ENCODE measurements at regions of chr12 and their contacts with region 1.

Region 1: DNA sequence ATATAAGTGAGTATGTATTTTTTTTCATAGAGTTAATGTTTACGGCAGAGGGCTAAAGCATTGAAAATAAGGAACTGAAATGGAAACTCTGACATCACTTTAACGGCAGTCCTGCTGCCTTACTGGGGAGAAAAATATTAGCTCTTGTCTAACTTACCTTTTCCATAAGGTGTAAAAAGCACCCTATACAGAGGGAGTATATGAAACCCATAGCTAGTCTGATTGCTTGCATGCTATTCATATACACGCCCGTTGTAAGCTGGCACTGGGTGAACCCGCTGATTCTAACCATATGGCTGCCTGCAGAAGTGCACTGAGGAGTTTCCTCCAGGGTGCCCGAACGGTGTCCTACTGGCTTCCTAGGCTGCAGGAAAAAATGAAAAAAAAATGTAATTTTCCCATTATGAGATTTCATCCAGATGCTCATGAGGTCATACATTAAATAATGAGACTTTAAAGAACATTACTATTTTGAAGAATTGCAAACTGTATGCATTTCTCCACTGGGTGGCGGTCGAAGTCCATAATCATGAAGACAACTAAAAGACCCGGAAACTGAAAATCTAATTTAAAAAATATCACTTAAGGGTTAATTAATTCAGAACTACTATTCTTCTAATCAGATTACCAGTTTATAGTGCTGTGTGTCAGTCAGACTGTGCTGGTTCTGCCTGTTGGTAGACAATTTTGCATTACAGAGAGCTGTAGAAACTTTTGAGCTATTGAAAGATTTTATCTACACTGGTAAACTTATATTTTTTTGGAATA is 144.7 kb downstream of the ALX1 start:
- DNase-seq: peak; percentile 15
- ATAC-seq: peak; percentile 91
- H3K4me3 ChIP-seq: no peak overlapping the region
- H3K27ac ChIP-seq: no peak overlapping the region
- H3K4me1 ChIP-seq: no peaks in the 10 kb centered on the region
- H3K27me3 ChIP-seq: no peaks in the 10 kb centered on the region
- CTCF ChIP-seq: peak; percentile 43 to 54 (median 53)
- EP300 ChIP-seq: peak in 1 of 2 experiments; percentile 90; a peak in 1 of 4 replicates
- POLR2A ChIP-seq: no peak
- RAD21 ChIP-seq: peak; percentile 70

Region 2: GRCh38 chr12:85188609-85189008 is 236.2 kb before region 1 on chr12:
- CTCF ChIA-PET with region 1: no interaction called
- POLR2A ChIA-PET with region 1: no interaction called
- RAD21 ChIA-PET with region 1: no interaction called
- SMC1A ChIA-PET with region 1: no interaction called
- in situ Hi-C with region 1: no loop called
- intact Hi-C with region 1: no loop called
- DNase-seq: no peak
- ATAC-seq: no peak
- H3K4me3 ChIP-seq: no peak overlapping the region
- H3K27ac ChIP-seq: no peak overlapping the region
- H3K4me1 ChIP-seq: no peaks in the 10 kb centered on the region
- H3K27me3 ChIP-seq: no peaks in the 10 kb centered on the region
- CTCF ChIP-seq: no peak
- EP300 ChIP-seq: no peak
- POLR2A ChIP-seq: no peak
- RAD21 ChIP-seq: no peak

Region 3: GRCh38 chr12:85310456-85311076 is 114.2 kb before region 1 on chr12:
- CTCF ChIA-PET with region 1: interaction called, 30 read pairs
- POLR2A ChIA-PET with region 1: no interaction called
- RAD21 ChIA-PET with region 1: interaction called, 8 read pairs
- SMC1A ChIA-PET with region 1: interaction called, 11 read pairs
- in situ Hi-C with region 1: no loop called
- intact Hi-C with region 1: no loop called
- DNase-seq: no peak
- ATAC-seq: no peak
- H3K4me3 ChIP-seq: no peak overlapping the region
- H3K27ac ChIP-seq: no peak overlapping the region
- H3K4me1 ChIP-seq: no peaks in the 10 kb centered on the region
- H3K27me3 ChIP-seq: no peaks in the 10 kb centered on the region
- CTCF ChIP-seq: peak in 2 of 3 experiments; percentile 5 to 30; a peak in 2 of 6 replicates
- EP300 ChIP-seq: no peak
- POLR2A ChIP-seq: no peak
- RAD21 ChIP-seq: no peak; the same call in 1 of the 2 replicates

Region 4: GRCh38 chr12:85413266-85413665 is 11.5 kb before region 1 on chr12:
- CTCF ChIA-PET with region 1: interaction called, 23 read pairs
- POLR2A ChIA-PET with region 1: no interaction called
- RAD21 ChIA-PET with region 1: interaction called, 5 read pairs
- SMC1A ChIA-PET with region 1: interaction called, 3 read pairs
- in situ Hi-C with region 1: no loop called
- intact Hi-C with region 1: no loop called
- DNase-seq: no peak
- ATAC-seq: no peak
- H3K4me3 ChIP-seq: no peak overlapping the region
- H3K27ac ChIP-seq: no peak overlapping the region
- H3K4me1 ChIP-seq: no peaks in the 10 kb centered on the region
- H3K27me3 ChIP-seq: no peaks in the 10 kb centered on the region
- CTCF ChIP-seq: no peak
- EP300 ChIP-seq: no peak
- POLR2A ChIP-seq: no peak
- RAD21 ChIP-seq: no peak

Region 5: GRCh38 chr12:85448548-85449139 is 23.9 kb after region 1 on chr12:
- CTCF ChIA-PET with region 1: interaction called, 65 read pairs
- POLR2A ChIA-PET with region 1: no interaction called
- RAD21 ChIA-PET with region 1: interaction called, 62 read pairs
- SMC1A ChIA-PET with region 1: interaction called, 22 read pairs
- in situ Hi-C with region 1: no loop called
- intact Hi-C with region 1: loop called (anchors 2 kb)
- DNase-seq: no peak
- ATAC-seq: peak; percentile 58
- H3K4me3 ChIP-seq: no peak overlapping the region
- H3K27ac ChIP-seq: no peak overlapping the region
- H3K4me1 ChIP-seq: no peaks in the 10 kb centered on the region
- H3K27me3 ChIP-seq: peaks cover 0 to 3% of the 10 kb centered on the region in 2 experiments; a peak in 1 of 4 replicates
- CTCF ChIP-seq: peak in 2 of 3 experiments; percentile 18 to 24; a peak in 3 of 6 replicates
- EP300 ChIP-seq: no peak
- POLR2A ChIP-seq: no peak
- RAD21 ChIP-seq: peak; percentile 66

Region 6: DNA sequence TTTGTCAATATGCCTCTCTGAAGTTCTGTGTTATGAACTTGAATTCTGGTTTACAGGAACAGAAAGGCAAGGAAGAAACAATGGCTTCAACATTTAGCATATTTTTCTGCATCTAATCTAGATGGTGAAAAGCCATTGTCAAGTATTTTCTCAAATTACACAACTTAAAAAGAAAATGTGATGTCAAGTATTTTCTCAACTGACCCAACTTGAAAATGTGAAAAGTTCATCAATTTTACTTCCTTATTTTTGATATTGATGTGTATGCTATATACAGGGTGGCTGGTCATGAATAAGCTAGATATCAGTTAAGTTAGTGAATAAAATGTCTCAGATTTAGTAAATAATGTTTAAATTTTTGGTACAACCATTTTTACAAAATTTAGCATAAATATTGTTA is 52.0 kb after region 1 on chr12:
- CTCF ChIA-PET with region 1: interaction called, 17 read pairs
- POLR2A ChIA-PET with region 1: no interaction called
- RAD21 ChIA-PET with region 1: interaction called, 8 read pairs
- SMC1A ChIA-PET with region 1: interaction called, 9 read pairs
- in situ Hi-C with region 1: no loop called
- intact Hi-C with region 1: no loop called
- DNase-seq: no peak
- ATAC-seq: no peak
- H3K4me3 ChIP-seq: no peak overlapping the region
- H3K27ac ChIP-seq: no peak overlapping the region
- H3K4me1 ChIP-seq: no peaks in the 10 kb centered on the region
- H3K27me3 ChIP-seq: no peaks in the 10 kb centered on the region
- CTCF ChIP-seq: no peak
- EP300 ChIP-seq: no peak
- POLR2A ChIP-seq: no peak
- RAD21 ChIP-seq: no peak

Region 7: GRCh38 chr12:85733221-85733840 is 308.6 kb after region 1 on chr12:
- CTCF ChIA-PET with region 1: no interaction called
- POLR2A ChIA-PET with region 1: no interaction called
- RAD21 ChIA-PET with region 1: no interaction called
- SMC1A ChIA-PET with region 1: no interaction called
- in situ Hi-C with region 1: no loop called
- intact Hi-C with region 1: no loop called
- DNase-seq: no peak
- ATAC-seq: no peak
- H3K4me3 ChIP-seq: no peak overlapping the region
- H3K27ac ChIP-seq: no peak overlapping the region
- H3K4me1 ChIP-seq: no peaks in the 10 kb centered on the region
- H3K27me3 ChIP-seq: no peaks in the 10 kb centered on the region
- CTCF ChIP-seq: no peak
- EP300 ChIP-seq: no peak
- POLR2A ChIP-seq: no peak
- RAD21 ChIP-seq: no peak

Region 8: GRCh38 chr12:85866986-85867776 is 442.4 kb after region 1 on chr12:
- CTCF ChIA-PET with region 1: interaction called, 86 read pairs
- POLR2A ChIA-PET with region 1: no interaction called
- RAD21 ChIA-PET with region 1: interaction called, 30 read pairs
- SMC1A ChIA-PET with region 1: interaction called, 21 read pairs
- in situ Hi-C with region 1: no loop called
- intact Hi-C with region 1: loop called (anchors 1 kb)
- DNase-seq: no peak
- ATAC-seq: peak; percentile 92
- H3K4me3 ChIP-seq: no peak overlapping the region
- H3K27ac ChIP-seq: no peak overlapping the region
- H3K4me1 ChIP-seq: no peaks in the 10 kb centered on the region
- H3K27me3 ChIP-seq: no peaks in the 10 kb centered on the region
- CTCF ChIP-seq: peak; percentile 68 to 76 (median 69)
- EP300 ChIP-seq: no peak
- POLR2A ChIP-seq: no peak
- RAD21 ChIP-seq: peak; percentile 75

Region 9: DNA sequence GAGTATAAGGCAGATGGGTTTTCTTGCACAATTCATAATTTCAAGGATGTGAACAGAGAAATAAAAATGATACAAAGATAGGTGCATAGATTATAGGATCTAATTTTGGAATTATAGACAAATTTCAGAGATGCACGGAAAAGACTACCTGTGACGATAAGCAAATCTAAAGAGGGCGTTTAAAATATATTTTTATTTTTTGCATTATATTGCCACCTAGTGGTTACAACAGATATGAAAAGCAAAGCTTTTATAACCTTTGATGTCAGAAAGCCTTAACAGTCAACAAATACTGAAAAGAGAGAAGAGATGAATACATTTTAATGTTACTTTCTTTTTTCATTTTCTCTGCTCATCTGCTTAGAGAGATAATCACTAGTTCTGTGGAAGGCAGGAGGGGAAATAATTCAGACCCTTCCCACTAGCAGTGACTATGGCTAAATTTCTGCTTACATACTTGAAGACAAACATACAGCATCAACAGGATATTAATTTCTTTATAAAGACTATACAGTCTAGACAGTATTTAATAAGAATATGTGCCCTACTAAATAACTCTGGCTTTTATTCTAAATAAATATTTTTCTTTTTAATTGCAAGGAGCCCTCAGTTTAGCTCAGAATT is 495.7 kb after region 1 on chr12:
- CTCF ChIA-PET with region 1: interaction called, 9 read pairs
- POLR2A ChIA-PET with region 1: no interaction called
- RAD21 ChIA-PET with region 1: interaction called, 11 read pairs
- SMC1A ChIA-PET with region 1: interaction called, 10 read pairs
- in situ Hi-C with region 1: no loop called
- intact Hi-C with region 1: no loop called
- DNase-seq: no peak
- ATAC-seq: peak; percentile 65; the same call in 2 of the 3 replicates
- H3K4me3 ChIP-seq: no peak overlapping the region
- H3K27ac ChIP-seq: no peak overlapping the region
- H3K4me1 ChIP-seq: no peaks in the 10 kb centered on the region
- H3K27me3 ChIP-seq: no peaks in the 10 kb centered on the region
- CTCF ChIP-seq: peak; percentile 31 to 48 (median 46); a peak in 4 of 6 replicates
- EP300 ChIP-seq: no peak
- POLR2A ChIP-seq: no peak
- RAD21 ChIP-seq: peak; percentile 34; the same call in 1 of the 2 replicates

Measured in GM12878 (cell line).